PC-3 (cell line): ENCODE measurements at regions of chr1 and their contacts with region 1.

Region 1: GRCh38 chr1:172449585-172450534 is 6.0 kb upstream of the PIGC start:
- DNase-seq: peak; percentile 97
- ATAC-seq: peak; percentile 48
- H3K4me3 ChIP-seq: peak overlapping the region; percentile 45
- H3K27ac ChIP-seq: peak overlapping the region; percentile 86
- H3K4me1 ChIP-seq: peaks cover 79% of the 10 kb centered on the region
- H3K27me3 ChIP-seq: no peaks in the 10 kb centered on the region
- CTCF ChIP-seq: peak; percentile 100

Region 2: DNA sequence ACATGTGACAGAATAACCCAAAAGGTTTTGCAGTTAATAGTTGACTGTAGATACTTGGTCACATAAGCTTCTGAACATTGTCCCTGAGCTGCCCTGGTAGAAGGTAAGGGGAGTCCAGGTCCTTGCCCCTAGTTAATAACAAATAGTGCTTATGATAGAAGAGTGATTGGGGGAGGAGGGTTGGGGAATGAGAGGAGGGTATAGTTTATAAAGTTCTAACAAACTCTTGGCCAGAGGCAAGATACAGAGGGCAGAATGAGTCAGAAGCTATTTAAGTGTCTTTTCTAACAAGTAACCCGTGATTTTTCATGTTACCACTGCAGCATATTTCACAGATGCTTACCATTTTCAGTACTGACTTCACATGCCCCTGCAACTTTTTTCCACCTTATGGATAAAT is 854.5 kb before region 1 on chr1:
- CTCF ChIA-PET with region 1: no interaction called
- POLR2A ChIA-PET with region 1: no interaction called
- intact Hi-C with region 1: no loop called
- DNase-seq: no peak
- ATAC-seq: peak; percentile 28
- H3K4me3 ChIP-seq: no peak overlapping the region
- H3K27ac ChIP-seq: no peak overlapping the region
- H3K4me1 ChIP-seq: no peaks in the 10 kb centered on the region
- H3K27me3 ChIP-seq: no peaks in the 10 kb centered on the region
- CTCF ChIP-seq: no peak

Region 3: GRCh38 chr1:172398970-172399755 is 50.7 kb before region 1 on chr1:
- CTCF ChIA-PET with region 1: no interaction called
- POLR2A ChIA-PET with region 1: no interaction called
- intact Hi-C with region 1: no loop called
- DNase-seq: peak; percentile 100
- ATAC-seq: peak; percentile 91
- H3K4me3 ChIP-seq: peak overlapping the region; percentile 1; the same call in 1 of the 2 replicates
- H3K27ac ChIP-seq: peak overlapping the region; percentile 59
- H3K4me1 ChIP-seq: peaks cover 49% of the 10 kb centered on the region
- H3K27me3 ChIP-seq: no peaks in the 10 kb centered on the region
- CTCF ChIP-seq: peak; percentile 99

Region 4: DNA sequence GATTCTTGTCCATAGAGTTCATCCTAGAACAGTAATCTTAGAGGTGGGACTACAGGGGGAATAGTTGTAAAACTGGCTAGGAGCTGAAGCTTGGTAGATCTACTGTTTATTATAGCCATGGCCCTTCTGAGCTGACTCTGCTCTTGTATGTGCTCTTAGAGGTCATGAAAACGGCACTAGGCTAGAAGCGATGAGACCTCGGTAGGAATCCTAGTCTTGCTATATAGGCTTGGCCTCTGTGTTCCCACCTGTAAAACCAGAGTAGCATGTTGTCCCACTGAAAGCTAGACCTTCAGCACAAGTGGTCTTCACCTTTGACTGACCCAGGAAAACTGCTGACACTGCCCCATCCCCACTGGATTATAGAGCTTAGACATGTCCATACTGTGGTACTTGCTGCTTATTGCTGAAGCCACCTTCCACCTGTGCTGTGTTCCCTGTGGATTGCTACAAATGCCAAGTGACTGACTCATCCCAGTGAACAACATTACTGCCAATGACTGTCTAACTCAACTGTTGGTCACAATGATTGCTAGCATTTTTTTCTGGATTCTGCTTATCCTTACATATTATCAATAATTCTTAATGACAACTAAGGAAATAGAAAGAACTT is 17.0 kb after region 1 on chr1:
- CTCF ChIA-PET with region 1: no interaction called
- POLR2A ChIA-PET with region 1: no interaction called
- intact Hi-C with region 1: loop called (anchors 2 kb)
- DNase-seq: peak; percentile 98
- ATAC-seq: peak; percentile 100
- H3K4me3 ChIP-seq: no peak overlapping the region
- H3K27ac ChIP-seq: no peak overlapping the region
- H3K4me1 ChIP-seq: peaks cover 23% of the 10 kb centered on the region
- H3K27me3 ChIP-seq: no peaks in the 10 kb centered on the region
- CTCF ChIP-seq: no peak

Region 5: DNA sequence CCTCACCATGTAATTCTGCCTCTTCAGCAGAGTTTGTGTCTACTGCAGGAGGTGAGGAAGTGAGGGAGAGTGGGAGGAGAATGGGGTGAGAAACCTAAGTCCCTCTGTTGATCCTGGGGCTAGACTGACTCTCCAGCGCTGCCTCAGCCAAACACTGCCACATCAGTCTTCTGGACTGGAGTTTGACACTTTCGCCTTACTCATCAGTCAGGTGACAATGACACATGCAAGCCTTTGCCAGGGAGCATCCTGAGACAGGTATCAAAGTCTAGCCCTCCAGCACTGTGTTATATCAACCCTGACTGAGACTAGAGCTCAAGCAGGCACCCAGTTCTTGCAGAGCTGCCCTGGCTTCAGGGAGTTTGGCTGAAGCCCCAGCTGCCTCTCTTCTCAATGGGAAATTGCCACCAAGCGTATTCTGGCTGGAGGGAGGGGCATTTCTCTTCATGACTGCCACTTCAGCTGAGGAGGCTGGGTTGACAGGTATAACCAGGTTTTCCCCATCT is 49.8 kb after region 1 on chr1:
- CTCF ChIA-PET with region 1: interaction called, 5 read pairs
- POLR2A ChIA-PET with region 1: no interaction called
- intact Hi-C with region 1: loop called (anchors 1 kb)
- DNase-seq: peak; percentile 100
- ATAC-seq: peak; percentile 92
- H3K4me3 ChIP-seq: no peak overlapping the region
- H3K27ac ChIP-seq: peak overlapping the region; percentile 44
- H3K4me1 ChIP-seq: peaks cover 38% of the 10 kb centered on the region
- H3K27me3 ChIP-seq: no peaks in the 10 kb centered on the region
- CTCF ChIP-seq: peak; percentile 14; the same call in 1 of the 2 replicates

Region 6: GRCh38 chr1:172588296-172589291 is 138.7 kb after region 1 on chr1:
- CTCF ChIA-PET with region 1: interaction called, 4 read pairs
- POLR2A ChIA-PET with region 1: interaction called, 5 read pairs
- intact Hi-C with region 1: loop called (anchors 1 kb)
- DNase-seq: peak; percentile 100
- ATAC-seq: peak; percentile 90
- H3K4me3 ChIP-seq: peak overlapping the region; percentile 46
- H3K27ac ChIP-seq: peak overlapping the region; percentile 75
- H3K4me1 ChIP-seq: peaks cover 61% of the 10 kb centered on the region
- H3K27me3 ChIP-seq: no peaks in the 10 kb centered on the region
- CTCF ChIP-seq: no peak

Region 7: DNA sequence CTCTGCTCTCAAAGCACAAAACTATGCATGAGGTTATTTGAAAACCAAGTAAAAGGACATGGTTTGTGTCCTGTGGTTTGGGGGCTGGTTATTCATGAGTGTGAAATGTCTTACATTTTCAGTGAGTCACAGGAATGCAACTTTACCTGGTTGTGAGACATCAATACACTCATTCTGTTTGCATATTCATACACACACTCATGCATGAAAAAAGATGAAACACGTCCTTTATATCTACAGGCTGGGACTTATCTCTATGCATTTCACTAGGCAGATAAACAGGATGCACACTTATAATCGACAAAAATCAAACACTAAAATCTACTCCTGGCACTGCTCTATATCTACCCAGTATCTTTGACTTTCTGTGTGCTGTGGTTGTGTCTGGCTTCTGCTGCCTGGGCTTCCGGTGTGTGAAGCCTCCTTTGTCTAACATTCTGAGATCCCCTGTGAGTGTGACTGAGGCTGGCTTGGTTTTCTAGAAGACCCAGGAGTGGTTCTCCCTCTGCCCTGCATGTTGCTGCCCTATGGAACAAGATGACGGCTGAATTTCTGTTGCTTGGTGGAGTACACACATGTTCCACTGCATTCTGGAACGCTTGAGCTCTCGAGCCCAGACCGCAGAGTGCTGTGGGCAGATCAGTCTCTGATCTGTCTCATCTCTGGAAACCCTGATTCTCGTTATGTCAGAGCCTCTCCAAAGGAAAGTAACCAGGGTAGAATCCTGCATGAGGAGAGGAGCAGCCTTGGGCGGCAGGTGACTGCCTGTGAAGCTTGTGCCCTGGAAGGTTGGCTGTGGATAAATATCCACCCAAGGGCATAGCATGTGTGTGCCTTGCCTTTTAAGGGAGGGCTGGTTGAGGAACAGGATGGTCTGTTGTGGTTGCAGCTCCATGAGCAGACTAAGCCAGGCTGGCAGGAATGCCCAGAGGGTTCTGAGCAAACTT is 189.3 kb after region 1 on chr1:
- CTCF ChIA-PET with region 1: interaction called, 5 read pairs
- POLR2A ChIA-PET with region 1: interaction called, 4 read pairs
- intact Hi-C with region 1: loop called (anchors 1 kb)
- DNase-seq: peak; percentile 100
- ATAC-seq: peak; percentile 78
- H3K4me3 ChIP-seq: peak overlapping the region; percentile 36
- H3K27ac ChIP-seq: peak overlapping the region; percentile 78
- H3K4me1 ChIP-seq: peaks cover 71% of the 10 kb centered on the region
- H3K27me3 ChIP-seq: no peaks in the 10 kb centered on the region
- CTCF ChIP-seq: no peak

Region 8: DNA sequence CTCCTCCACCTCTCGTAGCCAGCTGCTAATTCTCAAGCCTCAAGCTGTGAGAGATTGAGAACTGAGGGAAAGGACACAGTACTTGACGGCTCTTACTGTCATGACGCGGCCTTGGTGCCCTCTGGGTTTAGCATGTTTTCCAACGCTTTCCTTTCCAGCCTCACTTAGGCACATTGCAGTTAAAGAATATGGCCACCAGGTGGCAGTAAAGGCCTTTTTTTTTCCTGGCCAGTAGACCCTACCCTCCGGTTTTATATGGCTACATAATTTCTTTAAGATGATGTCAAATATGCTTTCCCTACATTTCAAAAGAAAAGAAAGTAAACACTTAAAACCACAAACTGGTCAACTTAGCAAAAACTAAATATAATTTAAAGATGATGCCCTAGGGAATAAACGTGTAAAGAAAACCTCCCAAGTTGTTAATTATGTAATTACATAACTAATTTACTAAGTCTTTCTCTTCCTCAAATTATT is 970.5 kb after region 1 on chr1:
- CTCF ChIA-PET with region 1: no interaction called
- POLR2A ChIA-PET with region 1: no interaction called
- intact Hi-C with region 1: loop called (anchors 5 kb)
- DNase-seq: peak; percentile 100
- ATAC-seq: peak; percentile 50
- H3K4me3 ChIP-seq: peak overlapping the region; percentile 35
- H3K27ac ChIP-seq: 0 out of 2 replicates have a peak overlapping the region, but pooled peaks have one; percentile 1
- H3K4me1 ChIP-seq: peaks cover 42% of the 10 kb centered on the region
- H3K27me3 ChIP-seq: no peaks in the 10 kb centered on the region
- CTCF ChIP-seq: peak; percentile 100